A673 (cell line): ENCODE measurements at regions of chr1 and their contacts with region 1.

Region 1: DNA sequence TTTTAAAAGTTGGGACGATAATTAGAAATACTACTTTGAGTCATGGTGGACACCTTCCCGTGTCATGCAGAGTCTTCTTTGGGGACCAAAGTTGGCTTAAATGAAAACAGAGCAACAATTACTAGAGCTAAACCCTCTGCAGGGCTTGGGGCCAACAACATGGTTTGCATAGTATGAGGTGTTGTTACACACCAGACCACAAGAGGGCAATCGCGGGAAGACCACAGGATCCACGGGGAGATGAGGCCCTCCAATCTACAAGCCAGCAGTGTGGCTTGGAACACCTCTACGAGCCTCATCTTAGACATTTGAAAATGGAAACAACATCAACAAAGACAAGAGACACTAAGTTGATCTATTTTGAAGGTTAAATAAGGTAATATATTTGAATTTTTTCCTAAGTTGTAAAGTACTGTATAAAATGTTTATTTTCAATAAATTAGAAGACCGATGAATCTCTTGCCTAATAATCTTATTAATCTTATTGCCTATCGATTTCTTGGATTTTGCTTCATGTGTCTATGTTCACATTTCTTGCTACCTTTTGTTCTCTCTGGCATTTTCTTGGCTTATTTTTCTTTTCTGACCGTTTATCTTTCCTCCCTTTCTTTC is 8.2 kb upstream of the SMCP start:
- DNase-seq: peak; percentile 80
- H3K4me3 ChIP-seq: no peak overlapping the region
- H3K27ac ChIP-seq: no peak overlapping the region
- H3K4me1 ChIP-seq: no peaks in the 10 kb centered on the region
- H3K27me3 ChIP-seq: peaks cover 6% of the 10 kb centered on the region
- CTCF ChIP-seq: peak; percentile 76

Region 2: DNA sequence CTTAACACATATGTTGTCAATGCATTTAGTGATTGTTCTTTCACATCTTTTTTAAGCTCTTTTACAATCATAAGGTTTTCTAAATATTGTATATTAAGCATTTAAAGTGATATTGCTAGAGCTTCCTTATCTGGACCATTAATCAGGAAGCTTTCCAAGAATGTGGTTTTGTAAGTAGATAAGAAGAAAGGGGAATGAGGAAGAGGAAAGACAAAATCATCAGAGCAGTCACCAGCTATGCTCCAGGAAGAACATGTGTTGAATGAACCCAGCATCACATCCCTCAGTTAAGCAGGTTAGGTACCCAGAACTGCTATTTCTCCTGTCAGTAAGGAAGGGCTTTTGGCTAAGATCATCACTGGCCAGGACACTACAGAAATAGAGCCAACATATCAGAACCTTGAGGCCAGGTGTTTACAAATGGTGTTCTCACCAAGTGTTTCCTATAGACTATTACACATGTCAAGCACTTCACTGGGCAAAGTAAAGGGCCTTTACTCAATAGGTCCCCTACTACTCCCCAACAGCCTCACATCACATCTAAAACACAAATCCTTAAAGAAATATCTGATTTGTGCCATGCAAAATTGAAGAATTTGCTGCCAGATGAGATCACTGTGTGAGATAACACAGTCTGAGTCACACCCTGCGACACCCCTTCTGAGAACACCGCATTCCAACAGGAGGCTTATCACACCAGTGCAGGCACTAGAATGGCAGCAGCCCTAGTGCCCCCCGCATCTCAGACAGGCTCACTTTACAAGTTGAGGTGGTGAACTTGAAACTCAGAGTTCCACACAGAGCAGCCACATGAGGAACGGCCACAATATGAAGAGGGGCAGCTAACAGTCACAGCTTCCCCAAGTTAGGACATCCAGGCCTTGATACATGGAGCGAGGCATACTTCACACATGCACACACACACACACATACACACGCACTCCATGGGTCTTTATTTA is 189.2 kb after region 1 on chr1:
- CTCF ChIA-PET with region 1: no interaction called
- POLR2A ChIA-PET with region 1: no interaction called
- intact Hi-C with region 1: loop called (anchors 10 kb)
- DNase-seq: no peak
- H3K4me3 ChIP-seq: no peak overlapping the region
- H3K27ac ChIP-seq: no peak overlapping the region
- H3K4me1 ChIP-seq: no peaks in the 10 kb centered on the region
- H3K27me3 ChIP-seq: peaks cover 70% of the 10 kb centered on the region
- CTCF ChIP-seq: no peak

Region 3: DNA sequence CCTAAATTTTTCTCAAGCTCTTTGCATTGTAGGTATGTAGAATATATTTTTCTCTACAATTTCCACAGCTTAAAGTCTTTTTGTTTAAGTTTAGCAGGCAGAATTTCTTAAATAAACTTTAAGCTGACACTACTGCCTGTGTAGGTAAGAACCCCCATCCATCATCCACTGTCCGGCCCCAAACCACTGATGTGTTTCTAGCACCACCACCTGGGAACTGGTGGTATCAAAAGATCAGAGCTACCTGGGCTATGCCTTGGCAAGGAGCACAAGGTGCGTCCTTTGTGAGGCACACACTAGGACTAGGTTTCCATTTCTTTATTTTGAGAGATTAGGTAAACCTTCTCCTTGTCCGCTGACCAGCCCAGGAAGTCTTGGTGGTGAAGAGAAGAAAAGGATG is 322.8 kb after region 1 on chr1:
- CTCF ChIA-PET with region 1: no interaction called
- POLR2A ChIA-PET with region 1: no interaction called
- intact Hi-C with region 1: loop called (anchors 10 kb)
- DNase-seq: peak; percentile 10
- H3K4me3 ChIP-seq: no peak overlapping the region
- H3K27ac ChIP-seq: no peak overlapping the region
- H3K4me1 ChIP-seq: no peaks in the 10 kb centered on the region
- H3K27me3 ChIP-seq: peaks cover 15% of the 10 kb centered on the region
- CTCF ChIP-seq: peak; percentile 34